Activated CD4-positive, alpha-beta T cell treated with anti-CD3 and anti-CD28 coated beads for 36 hours (primary cell): ENCODE measurements at regions of chr22 and their contacts with region 1.

Region 1: DNA sequence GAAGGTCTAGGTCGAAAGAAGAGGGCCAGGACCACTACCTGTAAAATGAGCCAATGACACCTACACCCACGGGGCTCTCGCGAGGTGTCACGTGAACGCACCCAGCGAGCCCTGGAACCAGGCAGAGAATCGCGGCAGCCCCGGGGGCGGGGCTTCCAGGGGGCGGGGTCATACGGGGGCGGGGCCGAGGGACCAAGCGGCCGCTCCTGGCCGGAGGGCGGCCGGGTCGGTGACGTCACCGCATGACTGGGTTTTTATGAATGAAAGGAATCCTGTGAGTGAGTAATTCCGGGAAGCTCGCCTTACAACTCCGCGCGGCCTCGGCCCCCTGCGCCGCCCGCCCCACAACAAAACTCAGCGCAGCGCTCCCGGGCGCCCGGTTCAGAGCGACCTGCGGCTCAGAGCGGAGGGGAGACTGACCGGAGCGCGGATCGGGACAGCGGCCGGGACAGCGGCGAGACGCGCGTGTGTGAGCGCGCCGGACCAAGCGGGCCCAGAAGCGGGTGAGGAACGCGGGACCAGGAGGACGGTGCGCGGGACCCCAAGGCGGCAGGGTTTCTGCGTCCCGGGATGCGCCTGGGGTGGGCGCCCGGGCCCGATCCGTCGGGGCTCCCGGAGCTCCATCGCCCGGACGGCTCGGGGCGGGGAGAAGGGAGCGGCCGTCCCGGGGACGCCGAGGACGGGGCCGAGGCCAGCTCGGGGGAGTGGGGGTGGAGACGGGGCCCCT is at the start of gene MAFF:
- DNase-seq: peak; percentile 97
- ATAC-seq: peak; percentile 72
- H3K4me3 Mint-ChIP-seq: peak within 1 kb of the TSS; percentile 82
- H3K27ac Mint-ChIP-seq: peak within 1 kb of the TSS; percentile 86
- H3K4me1 Mint-ChIP-seq: peaks cover 30% of the 10 kb centered on the region
- H3K27me3 Mint-ChIP-seq: no peaks in the 10 kb centered on the region
- total RNA-seq, gene MAFF: 8.3 to 9.4 TPM

Region 2: DNA sequence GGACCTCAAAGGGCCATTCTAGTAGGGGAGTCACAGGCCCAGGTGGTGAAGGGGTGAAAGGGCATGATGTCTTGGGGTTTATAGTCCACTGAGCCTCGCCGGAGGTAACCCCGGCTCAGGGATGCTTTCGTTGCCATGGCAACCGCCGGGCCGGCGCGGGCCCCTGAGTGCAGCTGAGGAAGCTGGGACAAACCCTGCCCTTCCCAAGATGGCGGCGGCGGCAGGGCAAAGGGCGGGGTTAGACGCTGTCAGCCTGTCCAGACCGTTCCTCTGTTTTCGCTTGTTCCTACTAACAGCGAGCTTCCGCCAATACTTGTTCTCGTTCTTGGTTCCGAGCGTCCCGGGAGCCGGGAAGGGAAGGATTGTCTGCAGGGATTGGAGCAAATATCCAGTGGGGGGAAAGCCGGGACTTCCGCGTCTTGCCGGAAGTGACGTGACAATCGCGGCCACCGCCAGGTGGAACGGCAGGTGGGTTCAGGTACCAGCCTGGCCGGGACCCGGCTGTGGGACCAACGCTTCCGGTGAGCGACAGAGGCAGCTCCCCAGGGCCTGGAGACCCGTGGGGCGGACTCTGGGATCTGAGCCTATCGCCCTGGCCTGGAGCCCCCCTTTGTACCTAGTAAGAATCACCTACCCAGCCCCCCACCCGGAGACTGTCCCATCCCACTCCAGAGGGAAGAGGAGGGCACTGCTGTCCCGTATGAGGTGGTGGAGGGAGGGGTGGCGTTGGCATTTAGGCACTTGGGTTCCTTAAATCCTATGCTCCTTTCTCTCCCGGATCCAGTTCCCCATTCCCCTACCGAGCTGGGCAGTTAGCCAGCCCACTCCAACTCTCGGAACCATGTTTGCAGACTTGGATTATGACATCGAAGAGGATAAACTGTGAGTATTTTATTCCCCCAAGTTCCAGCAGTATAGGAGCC is 144.6 kb before region 1 on chr22 and contains the start of gene PICK1:
- CTCF ChIA-PET with region 1: interaction called, 6 read pairs
- POLR2A ChIA-PET with region 1: no interaction called
- intact Hi-C with region 1: loop called (anchors 1 kb)
- DNase-seq: peak; percentile 92
- ATAC-seq: peak; percentile 93
- H3K4me3 Mint-ChIP-seq: peak within 1 kb of the TSS; percentile 88
- H3K27ac Mint-ChIP-seq: peak within 1 kb of the TSS; percentile 98
- H3K4me1 Mint-ChIP-seq: peaks cover 15% of the 10 kb centered on the region
- H3K27me3 Mint-ChIP-seq: no peaks in the 10 kb centered on the region
- total RNA-seq, gene PICK1: 14.9 to 17.2 TPM

Region 3: DNA sequence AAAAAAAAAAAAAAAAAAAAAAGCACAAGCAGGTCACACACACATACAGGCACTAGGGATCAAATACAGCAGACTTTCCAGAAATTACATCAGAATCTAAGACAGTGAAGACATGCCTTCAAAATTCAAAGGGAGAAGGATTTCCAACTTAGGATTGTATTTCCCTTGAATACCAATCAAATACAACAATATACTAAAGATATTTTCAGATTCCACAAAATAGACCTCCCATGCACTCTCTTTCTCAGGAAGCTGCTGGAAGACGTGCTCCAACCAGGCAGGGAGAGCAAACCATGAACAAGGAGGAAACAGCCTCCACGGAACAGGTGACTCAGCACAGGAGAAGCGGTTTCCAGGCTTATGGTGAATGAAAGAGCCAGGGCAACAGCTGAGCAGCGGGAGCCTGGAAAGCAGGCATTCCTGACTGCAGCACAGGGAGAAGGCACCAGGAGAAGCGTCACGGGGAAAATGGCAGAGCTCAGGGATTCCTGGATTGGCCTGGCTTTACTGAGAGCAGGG is 38.9 kb after region 1 on chr22:
- CTCF ChIA-PET with region 1: no interaction called
- POLR2A ChIA-PET with region 1: no interaction called
- intact Hi-C with region 1: no loop called
- DNase-seq: no peak
- ATAC-seq: no peak
- H3K4me3 Mint-ChIP-seq: no peak overlapping the region
- H3K27ac Mint-ChIP-seq: no peak overlapping the region
- H3K4me1 Mint-ChIP-seq: no peaks in the 10 kb centered on the region
- H3K27me3 Mint-ChIP-seq: no peaks in the 10 kb centered on the region

Region 4: DNA sequence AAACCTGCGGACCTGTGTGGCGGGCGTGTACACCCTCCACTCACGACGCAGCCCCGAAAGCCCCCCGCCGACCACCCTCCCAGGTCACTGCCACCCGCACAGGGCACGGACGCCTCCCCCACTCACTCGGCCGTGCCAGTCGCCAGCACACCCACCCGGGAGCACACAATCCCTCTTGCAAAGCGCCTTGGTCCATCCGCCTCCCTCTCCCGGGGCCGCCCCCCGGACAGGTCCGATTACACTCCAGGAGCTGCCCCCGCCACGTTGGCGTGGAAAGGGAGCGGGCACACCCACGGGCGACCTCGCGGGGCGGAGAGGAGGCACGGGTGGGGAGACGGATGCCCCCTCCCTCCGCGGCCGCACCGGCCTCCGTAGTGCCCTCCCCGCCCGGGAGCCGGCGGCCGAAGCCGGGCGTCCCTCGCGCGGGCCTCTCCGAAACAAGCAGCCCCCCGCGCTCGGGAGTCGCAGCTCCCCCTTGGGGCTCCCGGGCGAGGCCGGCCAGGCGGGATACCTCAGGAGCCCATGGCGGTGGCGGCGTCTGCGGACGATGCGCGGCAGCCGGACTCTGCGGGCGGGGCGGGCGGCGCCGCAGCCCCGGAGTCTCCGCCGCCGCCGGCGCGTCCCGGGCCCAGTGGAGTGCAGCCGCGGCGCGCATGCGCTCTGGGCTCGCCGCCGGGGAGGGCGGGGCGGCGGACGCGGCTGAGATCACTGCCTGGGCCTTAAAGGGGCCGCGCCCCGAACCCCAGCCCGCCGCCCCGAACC is 70.7 kb after region 1 on chr22 and contains the start of gene TMEM184B:
- CTCF ChIA-PET with region 1: no interaction called
- POLR2A ChIA-PET with region 1: no interaction called
- intact Hi-C with region 1: loop called (anchors 1 to 5 kb)
- DNase-seq: peak; percentile 88
- ATAC-seq: peak; percentile 96
- H3K4me3 Mint-ChIP-seq: peak within 1 kb of the TSS; percentile 81
- H3K27ac Mint-ChIP-seq: peak within 1 kb of the TSS; percentile 89
- H3K4me1 Mint-ChIP-seq: peaks cover 35% of the 10 kb centered on the region
- H3K27me3 Mint-ChIP-seq: no peaks in the 10 kb centered on the region
- total RNA-seq, gene TMEM184B: 16.0 to 19.8 TPM

Region 5: GRCh38 chr22:38398609-38399461 is 197.0 kb after region 1 on chr22:
- CTCF ChIA-PET with region 1: no interaction called
- POLR2A ChIA-PET with region 1: no interaction called
- intact Hi-C with region 1: loop called in 1 of 2 experiments (anchors 2 kb)
- DNase-seq: peak; percentile 92
- ATAC-seq: peak; percentile 67
- H3K4me3 Mint-ChIP-seq: peak overlapping the region; percentile 72
- H3K27ac Mint-ChIP-seq: peak overlapping the region; percentile 47
- H3K4me1 Mint-ChIP-seq: peaks cover 38% of the 10 kb centered on the region
- H3K27me3 Mint-ChIP-seq: no peaks in the 10 kb centered on the region

Region 6: GRCh38 chr22:38656256-38657044 is 454.6 kb after region 1 on chr22 and contains the starts of genes CBY1 and FAM227A:
- CTCF ChIA-PET with region 1: no interaction called
- POLR2A ChIA-PET with region 1: no interaction called
- intact Hi-C with region 1: loop called in 1 of 2 experiments (anchors 1 kb)
- DNase-seq: peak; percentile 89
- ATAC-seq: peak; percentile 83
- H3K4me3 Mint-ChIP-seq: peak within 1 kb of the TSS; percentile 79
- H3K27ac Mint-ChIP-seq: peak within 1 kb of the TSS; percentile 93
- H3K4me1 Mint-ChIP-seq: peaks cover 11% of the 10 kb centered on the region
- H3K27me3 Mint-ChIP-seq: no peaks in the 10 kb centered on the region
- total RNA-seq, gene CBY1: 9.8 to 11.6 TPM
- total RNA-seq, gene FAM227A: 0.30 to 0.63 TPM